ENCODE measurements at regions of chr17 and their contacts with region 1.

Region 1: DNA sequence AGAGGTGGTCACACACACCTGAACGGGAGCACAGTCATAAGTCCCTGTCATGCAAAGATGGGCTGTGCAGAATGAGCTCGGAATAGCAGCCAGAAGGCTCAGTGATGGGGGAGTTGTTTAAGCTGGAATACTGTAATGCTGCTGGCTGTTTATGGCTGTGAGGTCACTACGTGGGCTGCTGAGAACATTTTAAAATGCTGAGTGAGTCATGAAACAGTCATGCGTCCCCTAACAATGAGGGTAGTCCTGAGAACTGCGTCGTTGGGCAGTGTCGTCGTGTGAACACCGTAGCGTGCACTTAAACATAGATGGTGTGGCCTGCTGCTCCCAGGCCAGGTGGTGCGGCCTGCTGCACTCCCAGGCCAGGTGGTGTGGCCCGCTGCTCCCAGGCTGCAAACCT is 39.7 kb downstream of the TBCD start:
- DNase-seq: no peak
- H3K4me3 ChIP-seq: no peak overlapping the region
- H3K27ac ChIP-seq: no peak overlapping the region
- H3K4me1 ChIP-seq: peaks cover 12 to 34% (median 25%) of the 10 kb centered on the region in 4 donors
- H3K27me3 ChIP-seq: no peaks in the 10 kb centered on the region
- CTCF ChIP-seq: no peak
- EP300 ChIP-seq: no peak
- POLR2A ChIP-seq: no peak

Region 2: GRCh38 chr17:82687375-82687861 is 104.1 kb before region 1 on chr17:
- intact Hi-C with region 1: no loop called
- DNase-seq: no peak
- H3K4me3 ChIP-seq: no peak overlapping the region
- H3K27ac ChIP-seq: no peak overlapping the region
- H3K4me1 ChIP-seq: no peaks in the 10 kb centered on the region
- H3K27me3 ChIP-seq: no peaks in the 10 kb centered on the region
- CTCF ChIP-seq: no peak
- EP300 ChIP-seq: no peak
- POLR2A ChIP-seq: no peak

Region 3: DNA sequence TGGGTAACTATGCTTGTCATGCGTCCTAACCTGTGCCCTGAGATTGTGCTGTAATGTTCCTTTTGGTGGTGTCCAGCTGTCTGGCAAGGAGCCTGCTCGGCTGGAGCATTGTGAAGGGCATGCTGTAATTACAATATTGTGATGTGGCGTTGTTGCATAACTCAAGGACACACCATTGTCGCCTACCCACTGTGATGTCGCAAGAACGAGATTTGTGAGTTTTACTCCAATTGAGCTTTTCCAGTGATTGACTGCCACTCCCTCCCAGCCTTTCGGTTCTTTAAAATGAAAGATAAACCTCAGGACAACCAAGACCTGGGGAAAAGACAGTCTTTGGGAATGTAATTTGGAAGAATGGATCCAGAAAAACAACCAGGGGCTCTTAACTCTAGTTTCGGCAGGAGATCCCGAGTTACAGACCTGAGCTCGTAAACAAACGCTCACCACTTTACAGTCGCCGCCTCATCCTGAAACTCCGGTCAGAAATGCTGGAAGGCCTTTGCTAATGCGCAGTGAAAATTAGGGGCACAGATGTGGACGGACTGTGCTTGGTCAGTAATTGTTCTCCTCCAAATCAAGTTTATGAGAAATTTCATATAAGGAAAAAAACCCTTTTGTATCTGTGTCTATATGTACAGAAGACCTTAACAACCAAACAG is 47.0 kb after region 1 on chr17:
- intact Hi-C with region 1: loop called (anchors 2 kb)
- DNase-seq: no peak
- H3K4me3 ChIP-seq: no peak overlapping the region
- H3K27ac ChIP-seq: no peak overlapping the region
- H3K4me1 ChIP-seq: peaks cover 0 to 12% (median 9%) of the 10 kb centered on the region in 4 donors
- H3K27me3 ChIP-seq: no peaks in the 10 kb centered on the region
- CTCF ChIP-seq: no peak
- EP300 ChIP-seq: no peak
- POLR2A ChIP-seq: no peak

Region 4: GRCh38 chr17:82863941-82864774 is 72.6 kb after region 1 on chr17:
- intact Hi-C with region 1: no loop called
- DNase-seq: no peak
- H3K4me3 ChIP-seq: no peak overlapping the region
- H3K27ac ChIP-seq: no peak overlapping the region
- H3K4me1 ChIP-seq: peaks cover 40 to 54% (median 48%) of the 10 kb centered on the region in 4 donors
- H3K27me3 ChIP-seq: no peaks in the 10 kb centered on the region
- CTCF ChIP-seq: no peak
- EP300 ChIP-seq: no peak
- POLR2A ChIP-seq: no peak

Region 5: GRCh38 chr17:82938873-82939620 is 147.5 kb after region 1 on chr17:
- intact Hi-C with region 1: no loop called
- DNase-seq: no peak
- H3K4me3 ChIP-seq: no peak overlapping the region
- H3K27ac ChIP-seq: no peak overlapping the region
- H3K4me1 ChIP-seq: no peaks in the 10 kb centered on the region
- H3K27me3 ChIP-seq: no peaks in the 10 kb centered on the region
- CTCF ChIP-seq: no peak
- EP300 ChIP-seq: no peak
- POLR2A ChIP-seq: no peak

Measured in esophagus muscularis mucosa (tissue), 4 donors.